Naive thymus-derived CD4-positive, alpha-beta T cell (primary cell): ENCODE measurements at regions of chr7 and their contacts with region 1.

Region 1: DNA sequence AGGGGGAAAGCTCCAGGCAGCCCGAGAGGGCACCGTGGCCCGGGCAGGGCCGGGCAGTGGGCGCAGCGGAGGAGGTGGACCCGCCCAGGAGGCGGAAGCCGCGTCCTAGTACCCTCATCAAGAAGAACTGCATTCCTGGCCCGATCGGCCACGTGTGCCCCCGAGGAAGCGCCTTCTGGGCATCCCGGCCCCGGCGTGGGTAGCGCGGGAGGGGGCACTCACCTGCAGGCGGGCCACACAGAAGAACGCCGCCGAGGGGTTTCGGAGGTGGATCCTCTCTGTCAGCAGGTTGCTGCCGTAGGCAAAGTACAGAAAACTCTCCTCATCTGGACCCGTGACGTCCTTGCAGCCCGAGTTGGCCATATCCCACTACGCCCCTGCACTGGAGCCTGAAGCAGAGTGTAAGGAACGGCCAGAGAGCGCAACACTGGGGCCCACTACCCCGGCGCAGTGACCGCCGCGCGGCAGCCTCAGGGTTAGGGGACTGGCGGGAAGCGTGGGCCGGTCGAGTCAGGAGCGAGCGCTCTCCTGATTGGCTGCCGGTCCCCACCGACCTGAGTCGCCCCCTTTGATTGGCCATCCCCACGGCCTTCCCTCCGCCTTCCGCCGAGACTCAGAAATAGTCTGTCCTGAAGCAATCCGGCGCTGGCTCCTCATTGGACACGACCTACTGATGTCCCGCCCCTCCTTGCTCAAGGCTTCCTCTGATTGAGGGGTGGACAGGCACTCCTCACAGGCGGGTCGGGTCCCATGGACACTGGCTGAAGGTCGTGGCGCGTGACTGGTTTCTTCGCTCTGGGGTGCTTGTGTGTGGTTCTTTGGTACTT is at the start of gene GGCT:
- DNase-seq: peak; percentile 88 to 97 (median 95)
- ATAC-seq: peak; percentile 99
- H3K4me3 ChIP-seq: peak within 1 kb of the TSS; percentile 91
- H3K4me3 Mint-ChIP-seq: peak within 1 kb of the TSS; percentile 90 to 96 (median 95)
- H3K27ac ChIP-seq: peak within 1 kb of the TSS; percentile 72
- H3K27ac Mint-ChIP-seq: peak within 1 kb of the TSS; percentile 87 to 99 (median 91)
- H3K4me1 ChIP-seq: peaks cover 12% of the 10 kb centered on the region in 2 donors
- H3K4me1 Mint-ChIP-seq: peaks cover 19 to 51% (median 44%) of the 10 kb centered on the region in 7 donors
- H3K27me3 ChIP-seq: no peaks in the 10 kb centered on the region
- H3K27me3 Mint-ChIP-seq: no peaks in the 10 kb centered on the region
- total RNA-seq, gene GGCT: 9.5 to 39.2 (median 10.8) TPM

Region 2: GRCh38 chr7:30276203-30276900 is 228.2 kb before region 1 on chr7:
- CTCF ChIA-PET with region 1: interaction called, 3 read pairs
- POLR2A ChIA-PET with region 1: interaction called, 3 read pairs
- intact Hi-C with region 1: loop called in 1 of 2 experiments (anchors 1 kb)
- DNase-seq: peak; percentile 10 to 66 (median 40)
- ATAC-seq: peak; percentile 79
- H3K4me3 ChIP-seq: no peak overlapping the region
- H3K4me3 Mint-ChIP-seq: no peak overlapping the region
- H3K27ac ChIP-seq: no peak overlapping the region
- H3K27ac Mint-ChIP-seq: peak overlapping the region in 1 of 9 donors; percentile 10
- H3K4me1 ChIP-seq: no peaks in the 10 kb centered on the region
- H3K4me1 Mint-ChIP-seq: peaks cover 0 to 9% (median 4%) of the 10 kb centered on the region in 7 donors
- H3K27me3 ChIP-seq: no peaks in the 10 kb centered on the region
- H3K27me3 Mint-ChIP-seq: peaks cover 0 to 4% (median 0%) of the 10 kb centered on the region in 5 donors

Region 3: DNA sequence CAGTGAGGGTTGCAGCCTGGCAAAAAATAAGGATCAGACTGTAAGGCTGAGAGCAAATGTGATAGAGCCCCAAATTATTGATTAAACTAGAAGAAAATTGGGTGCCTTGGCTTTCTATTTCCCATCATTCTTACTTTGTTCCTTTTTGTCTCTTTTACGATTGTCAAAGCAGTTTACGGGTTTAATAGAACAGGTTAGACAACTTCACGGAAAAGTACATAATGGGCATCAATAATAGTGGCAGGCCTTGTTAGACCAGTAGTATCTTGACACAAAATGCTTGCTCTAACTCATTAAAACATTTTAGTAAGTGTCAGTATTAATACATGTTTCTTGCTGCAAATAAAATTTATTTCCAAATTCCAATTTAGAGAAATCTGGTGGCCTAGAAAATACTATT is 14.6 kb after region 1 on chr7:
- CTCF ChIA-PET with region 1: no interaction called
- POLR2A ChIA-PET with region 1: no interaction called
- intact Hi-C with region 1: no loop called
- DNase-seq: no peak
- ATAC-seq: no peak
- H3K4me3 ChIP-seq: no peak overlapping the region
- H3K4me3 Mint-ChIP-seq: no peak overlapping the region
- H3K27ac ChIP-seq: no peak overlapping the region
- H3K27ac Mint-ChIP-seq: no peak overlapping the region
- H3K4me1 ChIP-seq: no peaks in the 10 kb centered on the region
- H3K4me1 Mint-ChIP-seq: peaks cover 0 to 4% (median 0%) of the 10 kb centered on the region in 7 donors
- H3K27me3 ChIP-seq: no peaks in the 10 kb centered on the region
- H3K27me3 Mint-ChIP-seq: no peaks in the 10 kb centered on the region

Region 4: GRCh38 chr7:30594549-30595435 is 90.2 kb after region 1 on chr7 and contains the start of gene GARS1:
- CTCF ChIA-PET with region 1: no interaction called
- POLR2A ChIA-PET with region 1: interaction called, 3 read pairs
- intact Hi-C with region 1: loop called (anchors 1 kb)
- DNase-seq: peak; percentile 85 to 92 (median 90)
- ATAC-seq: peak; percentile 91
- H3K4me3 ChIP-seq: peak within 1 kb of the TSS; percentile 62
- H3K4me3 Mint-ChIP-seq: peak within 1 kb of the TSS; percentile 91 to 100 (median 99)
- H3K27ac ChIP-seq: peak within 1 kb of the TSS; percentile 91
- H3K27ac Mint-ChIP-seq: peak within 1 kb of the TSS; percentile 97 to 100 (median 99)
- H3K4me1 ChIP-seq: peaks cover 3 to 22% of the 10 kb centered on the region in 2 donors
- H3K4me1 Mint-ChIP-seq: peaks cover 52 to 88% (median 77%) of the 10 kb centered on the region in 7 donors
- H3K27me3 ChIP-seq: no peaks in the 10 kb centered on the region
- H3K27me3 Mint-ChIP-seq: no peaks in the 10 kb centered on the region
- total RNA-seq, gene GARS1: 73.8 to 143 (median 75.8) TPM

Region 5: DNA sequence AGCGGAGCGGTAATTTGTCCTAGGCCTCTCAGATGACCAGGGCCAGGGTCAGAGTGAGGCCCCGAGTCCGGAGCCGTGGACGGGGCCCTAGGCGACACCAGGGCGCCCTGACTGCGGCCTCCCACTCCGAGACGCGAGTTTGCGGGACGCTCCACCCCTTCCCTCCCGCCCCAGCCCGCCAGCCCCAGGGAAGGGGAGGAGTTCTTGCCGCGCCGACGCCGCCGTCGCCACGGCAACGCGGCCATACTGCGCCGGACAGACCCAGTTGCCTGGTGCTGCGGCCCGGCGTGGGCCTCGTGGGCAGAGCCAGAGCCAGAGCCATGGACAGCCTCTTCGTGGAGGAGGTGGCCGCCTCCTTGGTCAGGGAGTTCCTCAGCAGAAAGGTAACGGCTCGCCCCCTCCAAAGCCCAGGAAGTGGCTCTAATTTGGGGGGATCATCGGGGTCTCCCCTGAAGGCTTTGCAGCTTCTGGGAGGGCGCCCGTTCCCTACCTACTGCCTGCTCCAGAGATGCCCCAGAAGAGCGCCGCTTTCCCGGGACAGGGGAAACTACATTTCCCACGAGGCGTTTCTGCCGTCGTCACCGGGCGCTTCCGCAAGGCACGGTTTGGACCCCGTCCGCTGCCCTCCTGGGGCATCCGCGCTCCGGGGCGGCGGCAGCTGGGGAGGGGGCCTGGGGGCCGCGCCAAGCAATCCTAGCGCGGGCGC is 266.8 kb after region 1 on chr7 and contains the start of gene MINDY4:
- CTCF ChIA-PET with region 1: no interaction called
- POLR2A ChIA-PET with region 1: no interaction called
- intact Hi-C with region 1: loop called (anchors 1 kb)
- DNase-seq: peak; percentile 30 to 69 (median 52)
- ATAC-seq: peak; percentile 89
- H3K4me3 ChIP-seq: peak within 1 kb of the TSS; percentile 82
- H3K4me3 Mint-ChIP-seq: peak within 1 kb of the TSS; percentile 68 to 94 (median 88)
- H3K27ac ChIP-seq: peak within 1 kb of the TSS; percentile 71
- H3K27ac Mint-ChIP-seq: peak within 1 kb of the TSS; percentile 51 to 83 (median 70)
- H3K4me1 ChIP-seq: no peaks in the 10 kb centered on the region
- H3K4me1 Mint-ChIP-seq: peaks cover 0 to 12% (median 6%) of the 10 kb centered on the region in 7 donors
- H3K27me3 ChIP-seq: no peaks in the 10 kb centered on the region
- H3K27me3 Mint-ChIP-seq: peaks cover 0 to 9% (median 0%) of the 10 kb centered on the region in 5 donors
- total RNA-seq, gene MINDY4: 0.82 to 1.5 (median 0.94) TPM